ENCODE measurements at regions of chr2 and their contacts with region 1.

Region 1: DNA sequence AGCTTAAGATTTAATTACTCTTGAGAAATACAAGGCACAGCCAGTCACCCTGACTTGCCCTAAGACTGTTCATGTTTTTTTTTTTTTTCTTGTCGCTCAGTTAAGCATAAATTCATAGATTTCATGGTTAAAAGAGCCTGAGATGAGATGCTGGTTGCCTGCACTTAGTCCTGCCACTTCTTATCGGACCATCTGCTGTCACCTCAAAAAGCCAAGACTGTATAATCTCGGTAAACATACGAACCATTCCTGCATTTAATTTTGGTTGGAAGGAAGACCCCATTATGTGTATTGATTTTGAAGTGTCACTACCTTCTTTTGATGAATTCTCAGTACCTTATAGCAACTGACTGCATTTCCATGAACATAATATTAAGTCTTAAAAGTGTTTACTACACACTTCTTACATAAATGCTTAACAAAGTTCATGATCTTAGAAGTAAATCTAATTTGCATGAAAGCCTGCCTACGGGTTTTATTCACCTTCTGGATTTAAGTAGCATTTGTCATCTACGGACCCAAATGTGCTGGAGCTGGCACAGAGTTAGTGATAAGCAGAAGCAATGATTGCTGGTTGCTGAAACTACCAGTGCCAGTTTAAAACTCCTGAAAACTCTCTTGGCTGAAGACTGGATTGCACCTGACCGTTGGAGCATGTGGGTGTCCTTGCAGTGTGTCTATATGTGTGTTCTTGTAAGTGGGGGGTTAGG is 843.4 kb downstream of the TMEM182 start:
- DNase-seq: no peak
- ATAC-seq: no peak
- H3K4me3 ChIP-seq: no peak overlapping the region
- H3K27ac ChIP-seq: no peak overlapping the region
- H3K4me1 ChIP-seq: no peaks in the 10 kb centered on the region; a peak in 1 of 5 replicates
- H3K27me3 ChIP-seq: no peaks in the 10 kb centered on the region
- CTCF ChIP-seq: no peak
- EP300 ChIP-seq: no peak
- POLR2A ChIP-seq: no peak
- RAD21 ChIP-seq: no peak

Region 2: GRCh38 chr2:103616891-103617290 is 11.7 kb after region 1 on chr2:
- CTCF ChIA-PET with region 1: no interaction called
- POLR2A ChIA-PET with region 1: no interaction called
- in situ Hi-C with region 1: no loop called
- intact Hi-C with region 1: no loop called
- DNase-seq: no peak
- ATAC-seq: no peak
- H3K4me3 ChIP-seq: no peak overlapping the region
- H3K27ac ChIP-seq: no peak overlapping the region
- H3K4me1 ChIP-seq: no peaks in the 10 kb centered on the region
- H3K27me3 ChIP-seq: no peaks in the 10 kb centered on the region
- CTCF ChIP-seq: no peak
- EP300 ChIP-seq: no peak
- POLR2A ChIP-seq: no peak
- RAD21 ChIP-seq: no peak

Region 3: DNA sequence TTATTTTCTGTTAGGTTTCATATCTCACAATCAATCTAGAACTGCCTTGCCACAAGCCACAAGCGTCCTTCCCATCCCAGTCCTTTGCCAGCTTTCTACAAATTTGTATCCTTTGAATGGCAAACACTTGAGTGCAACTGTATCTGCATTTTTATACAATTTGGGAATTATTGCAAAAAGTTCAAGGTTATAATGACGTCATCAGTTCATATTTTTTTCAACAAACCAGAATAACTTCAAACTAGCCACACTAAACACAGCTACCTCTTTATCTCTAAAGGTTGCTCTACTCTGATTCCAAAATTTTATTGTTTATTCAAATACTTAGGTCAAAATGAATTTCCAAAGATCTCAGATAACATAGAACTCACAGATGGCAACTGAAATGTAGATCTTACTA is 33.8 kb after region 1 on chr2:
- CTCF ChIA-PET with region 1: no interaction called
- POLR2A ChIA-PET with region 1: no interaction called
- in situ Hi-C with region 1: no loop called
- intact Hi-C with region 1: loop called (anchors 2 kb)
- DNase-seq: no peak
- ATAC-seq: no peak
- H3K4me3 ChIP-seq: no peak overlapping the region
- H3K27ac ChIP-seq: no peak overlapping the region
- H3K4me1 ChIP-seq: no peaks in the 10 kb centered on the region; a peak in 1 of 5 replicates
- H3K27me3 ChIP-seq: no peaks in the 10 kb centered on the region
- CTCF ChIP-seq: no peak
- EP300 ChIP-seq: no peak
- POLR2A ChIP-seq: no peak
- RAD21 ChIP-seq: no peak

Measured in K562 (cell line).